GM13977 (cell line): ENCODE measurements at regions of chr10 and their contacts with region 1.

Region 1: DNA sequence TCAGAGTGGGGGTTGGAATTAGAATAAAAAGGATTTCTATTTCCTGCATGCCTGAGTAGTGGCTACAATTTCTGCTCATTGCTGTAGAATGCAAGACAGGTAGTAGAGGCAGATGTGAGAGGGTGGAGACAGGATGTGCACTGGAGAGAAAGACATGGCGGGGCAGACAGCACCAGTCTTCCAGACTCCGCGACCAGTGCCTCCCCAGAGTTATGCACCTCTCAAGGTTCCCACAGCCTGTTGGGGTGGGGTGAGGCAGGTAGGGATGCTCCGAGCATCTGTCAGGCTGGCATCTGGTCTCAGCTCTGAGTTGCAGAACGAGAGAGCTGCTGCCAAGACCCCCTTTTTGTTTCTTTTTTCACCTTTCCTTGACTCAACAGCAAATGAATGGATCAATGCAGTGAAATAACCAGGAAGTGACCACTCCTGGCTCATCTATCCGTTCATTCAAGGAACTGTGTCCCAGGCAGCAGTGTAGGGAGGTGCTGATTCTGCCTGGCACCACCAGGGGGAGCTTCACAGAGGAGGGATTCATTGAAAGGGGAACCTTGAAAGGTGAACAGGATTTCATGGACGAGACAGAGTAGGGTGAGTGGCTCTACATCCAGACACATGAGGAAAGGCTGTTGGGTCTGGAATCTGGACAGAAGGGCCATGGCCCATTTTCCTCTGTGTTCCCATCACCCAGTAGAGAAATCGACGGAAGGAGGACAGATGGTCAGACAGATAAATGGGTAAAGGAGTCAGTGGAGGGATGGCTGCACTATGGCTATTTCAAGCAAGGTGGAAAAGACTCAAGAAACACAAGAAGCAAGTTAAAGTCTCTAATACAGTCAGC is 17.2 kb upstream of the SLC18A3 start:
- DNase-seq: peak; percentile 78
- CTCF ChIP-seq: peak; percentile 96

Region 2: DNA sequence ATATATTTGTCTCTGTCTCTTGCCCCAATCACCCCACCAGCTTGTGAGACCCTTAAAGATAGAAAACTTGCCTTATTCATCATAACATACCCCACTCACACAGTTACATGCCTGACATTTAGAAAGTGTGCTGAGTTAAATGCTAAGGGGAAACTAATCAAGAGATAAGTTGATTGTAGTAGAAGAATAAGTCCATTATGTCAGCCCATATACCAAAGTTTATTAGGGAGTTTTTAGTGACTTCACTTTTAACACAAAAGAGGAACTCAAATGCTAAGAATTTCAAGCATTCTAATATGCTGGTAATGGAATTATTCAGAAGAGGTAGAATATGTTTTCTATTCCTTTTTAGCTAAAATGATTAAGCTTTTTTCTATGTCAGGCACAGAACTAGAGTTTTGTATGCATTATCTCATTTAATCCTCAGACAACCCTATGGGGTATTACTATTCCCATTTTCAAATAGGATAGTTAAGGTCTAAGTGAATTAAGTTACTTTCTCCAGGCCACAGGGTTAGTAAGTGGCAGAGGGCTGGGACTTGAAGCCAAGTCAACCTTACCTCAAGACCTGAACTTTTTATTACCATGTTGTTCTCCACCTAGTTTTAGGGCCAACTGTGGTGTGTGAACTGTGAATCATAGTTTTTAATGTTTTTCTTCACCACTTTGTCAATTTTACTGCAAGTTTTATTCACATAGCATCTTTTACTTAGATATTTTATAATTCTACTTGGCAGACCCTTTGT is 638.7 kb after region 1 on chr10:
- in situ Hi-C with region 1: loop called (anchors 25 kb)
- DNase-seq: no peak
- CTCF ChIP-seq: no peak